Right lobe of liver (tissue), 6 donors: ENCODE measurements at regions of chr5 and their contacts with region 1.

Region 1: GRCh38 chr5:133111299-133111698 is 59.5 kb downstream of the HSPA4 start:
- DNase-seq: peak; percentile 80 to 83 (median 81)
- ATAC-seq: peak; percentile 85 to 91 (median 88)
- H3K4me3 ChIP-seq: no peak overlapping the region
- H3K27ac ChIP-seq: no peak overlapping the region
- H3K4me1 ChIP-seq: no peaks in the 10 kb centered on the region
- H3K27me3 ChIP-seq: no peaks in the 10 kb centered on the region
- CTCF ChIP-seq: peak; percentile 87 to 94 (median 92)
- POLR2A ChIP-seq: no peak

Region 2: DNA sequence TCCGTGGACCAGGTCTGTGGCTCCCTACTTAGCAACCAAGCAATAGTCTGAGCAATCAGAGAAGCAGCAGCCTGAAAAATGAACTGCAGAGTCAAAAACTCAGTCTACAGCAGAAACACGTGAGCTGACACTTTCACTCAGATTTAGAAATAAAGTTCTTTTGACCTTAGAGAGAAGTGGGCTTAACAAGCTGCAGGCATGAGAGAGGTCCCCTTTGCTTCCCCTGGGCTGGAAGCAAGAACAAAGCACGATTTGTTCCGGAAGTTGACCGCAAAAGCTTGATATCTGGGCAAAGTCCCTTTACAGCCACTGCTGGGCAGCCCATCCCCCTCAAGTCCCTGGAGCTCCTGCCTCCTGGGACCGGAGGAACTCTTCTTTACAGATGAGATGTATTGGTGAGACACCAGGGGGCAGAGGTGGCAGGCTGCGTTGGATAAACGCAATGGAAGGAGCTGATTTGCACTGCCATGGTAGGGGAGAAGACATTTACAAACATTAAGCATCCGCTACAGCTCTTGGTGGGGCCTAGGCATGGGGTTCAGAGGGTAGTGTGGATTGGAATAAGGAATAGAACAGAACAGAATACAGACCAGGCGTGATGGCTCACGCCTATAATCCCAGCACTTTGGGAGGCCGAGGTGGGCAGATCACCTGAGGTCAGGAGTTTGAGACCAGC is 304.0 kb before region 1 on chr5:
- intact Hi-C with region 1: no loop called
- DNase-seq: peak; percentile 57 to 81 (median 74)
- ATAC-seq: peak; percentile 91 to 95 (median 92)
- H3K4me3 ChIP-seq: peak overlapping the region in 2 of 3 donors; percentile 17 to 19
- H3K27ac ChIP-seq: peak overlapping the region in 2 of 3 donors; percentile 42 to 64
- H3K4me1 ChIP-seq: peaks cover 0 to 32% (median 3%) of the 10 kb centered on the region in 4 donors
- H3K27me3 ChIP-seq: no peaks in the 10 kb centered on the region
- CTCF ChIP-seq: peak; percentile 13 to 37 (median 26)
- POLR2A ChIP-seq: peak; percentile 29

Region 3: DNA sequence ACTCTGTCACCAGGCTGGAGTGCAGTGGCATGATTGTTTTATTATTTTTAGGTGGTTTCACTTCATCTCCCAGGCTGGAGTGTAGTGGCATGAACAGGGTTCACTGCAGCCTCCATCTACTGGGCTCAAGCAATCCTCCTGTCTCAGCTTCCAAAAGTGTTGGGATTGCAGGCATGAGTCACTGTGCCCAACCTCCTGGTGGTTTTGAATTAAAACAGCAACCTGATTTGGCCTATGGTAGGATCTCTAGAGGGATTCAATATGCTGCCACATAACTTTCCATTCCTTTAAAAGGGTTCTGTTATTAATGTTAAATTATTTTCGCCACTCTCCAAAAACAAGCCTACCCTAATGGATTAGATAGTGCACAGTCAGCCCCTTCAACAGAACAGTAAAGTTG is 69.4 kb before region 1 on chr5:
- intact Hi-C with region 1: no loop called
- DNase-seq: no peak
- ATAC-seq: no peak
- H3K4me3 ChIP-seq: no peak overlapping the region
- H3K27ac ChIP-seq: no peak overlapping the region
- H3K4me1 ChIP-seq: no peaks in the 10 kb centered on the region
- H3K27me3 ChIP-seq: no peaks in the 10 kb centered on the region
- CTCF ChIP-seq: no peak
- POLR2A ChIP-seq: no peak

Region 4: DNA sequence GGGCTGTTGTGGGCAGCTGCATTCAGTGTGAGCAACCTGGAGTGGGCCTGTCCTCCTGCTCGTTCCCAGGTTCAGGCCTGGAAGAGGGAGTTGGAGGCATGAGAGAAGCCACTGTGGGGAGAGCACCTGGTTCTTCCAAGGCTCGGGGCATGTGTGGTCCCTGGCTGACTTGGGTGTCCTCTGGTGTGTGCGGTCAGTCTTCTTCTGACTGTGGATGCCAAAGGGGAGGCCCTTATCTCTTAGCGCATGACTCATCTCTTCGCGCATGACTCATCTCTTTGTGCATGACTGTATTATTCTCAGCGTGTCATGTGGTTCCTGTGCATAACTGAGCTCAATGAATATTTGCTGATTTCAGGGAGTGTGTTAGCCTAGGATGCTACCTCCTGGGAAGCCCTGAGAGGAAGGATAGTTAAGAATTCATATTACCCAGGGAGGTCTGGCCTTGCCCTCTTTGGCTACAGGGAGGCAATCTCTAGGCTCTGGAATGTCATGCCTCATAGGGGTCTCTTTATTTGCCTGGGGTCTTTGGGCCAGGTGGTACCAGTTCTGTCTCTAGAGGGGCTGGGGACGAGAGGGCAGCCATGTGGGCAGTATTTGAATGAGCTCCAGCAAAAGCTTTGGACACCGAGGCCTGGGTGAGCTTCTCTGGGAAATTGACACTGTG is 129.3 kb after region 1 on chr5:
- intact Hi-C with region 1: loop called in 1 of 2 experiments (anchors 10 kb)
- DNase-seq: no peak
- ATAC-seq: peak; percentile 68 to 91 (median 83)
- H3K4me3 ChIP-seq: no peak overlapping the region
- H3K27ac ChIP-seq: peak overlapping the region in 1 of 3 donors; percentile 3
- H3K4me1 ChIP-seq: no peaks in the 10 kb centered on the region
- H3K27me3 ChIP-seq: no peaks in the 10 kb centered on the region
- CTCF ChIP-seq: no peak
- POLR2A ChIP-seq: no peak

Region 5: DNA sequence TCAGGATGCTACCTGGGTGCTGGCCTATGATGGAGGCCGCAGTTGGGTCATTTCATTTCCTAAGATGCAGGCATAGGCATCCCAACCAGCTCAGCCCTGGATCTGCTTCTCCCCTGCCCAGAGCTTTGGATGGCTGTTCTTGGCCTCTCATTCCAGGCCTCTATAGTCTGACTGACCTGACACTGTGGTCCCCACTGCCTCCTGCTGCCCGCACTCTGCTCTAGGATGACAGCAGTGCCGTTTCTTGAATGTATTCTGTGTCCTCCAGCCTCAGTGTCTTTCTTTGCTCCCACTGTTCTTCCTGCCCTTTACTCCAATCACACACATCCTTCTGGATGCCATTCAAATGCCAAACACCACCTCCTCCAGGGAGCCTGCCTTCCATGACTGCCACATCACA is 176.2 kb after region 1 on chr5:
- intact Hi-C with region 1: loop called in 1 of 2 experiments (anchors 5 kb)
- DNase-seq: peak in 2 of 3 donors; percentile 59 to 67
- ATAC-seq: peak; percentile 21 to 74 (median 46)
- H3K4me3 ChIP-seq: no peak overlapping the region
- H3K27ac ChIP-seq: no peak overlapping the region
- H3K4me1 ChIP-seq: no peaks in the 10 kb centered on the region
- H3K27me3 ChIP-seq: no peaks in the 10 kb centered on the region
- CTCF ChIP-seq: peak; percentile 29 to 55 (median 46)
- POLR2A ChIP-seq: no peak

Region 6: GRCh38 chr5:133460172-133460758 is 349.0 kb after region 1 on chr5:
- intact Hi-C with region 1: loop called in 1 of 2 experiments (anchors 10 kb)
- DNase-seq: peak in 2 of 3 donors; percentile 29 to 53
- ATAC-seq: peak in 3 of 4 donors; percentile 17 to 29 (median 21)
- H3K4me3 ChIP-seq: no peak overlapping the region
- H3K27ac ChIP-seq: no peak overlapping the region
- H3K4me1 ChIP-seq: peaks cover 0 to 26% (median 12%) of the 10 kb centered on the region in 4 donors
- H3K27me3 ChIP-seq: no peaks in the 10 kb centered on the region
- CTCF ChIP-seq: peak; percentile 46 to 78 (median 58)
- POLR2A ChIP-seq: no peak